ENCODE measurements at regions of chr9 and their contacts with region 1.

Region 1: GRCh38 chr9:68546596-68547390 is 6.1 kb upstream of the TMEM252 start:
- DNase-seq: no peak
- H3K4me3 ChIP-seq: no peak overlapping the region
- H3K27ac ChIP-seq: peak overlapping the region in 7 of 59 donors; percentile 24 to 51 (median 45)
- H3K27me3 ChIP-seq: peaks cover 0 to 6% (median 0%) of the 10 kb centered on the region in 45 donors
- CTCF ChIP-seq: no peak

Region 2: GRCh38 chr9:68462105-68462775 is 84.6 kb before region 1 on chr9:
- intact Hi-C with region 1: loop called in 1 of 2 experiments (anchors 10 kb)
- DNase-seq: no peak
- H3K4me3 ChIP-seq: no peak overlapping the region
- H3K27ac ChIP-seq: no peak overlapping the region
- H3K27me3 ChIP-seq: no peaks in the 10 kb centered on the region
- CTCF ChIP-seq: no peak